ENCODE measurements at regions of chr1 and their contacts with region 1.

Region 1: DNA sequence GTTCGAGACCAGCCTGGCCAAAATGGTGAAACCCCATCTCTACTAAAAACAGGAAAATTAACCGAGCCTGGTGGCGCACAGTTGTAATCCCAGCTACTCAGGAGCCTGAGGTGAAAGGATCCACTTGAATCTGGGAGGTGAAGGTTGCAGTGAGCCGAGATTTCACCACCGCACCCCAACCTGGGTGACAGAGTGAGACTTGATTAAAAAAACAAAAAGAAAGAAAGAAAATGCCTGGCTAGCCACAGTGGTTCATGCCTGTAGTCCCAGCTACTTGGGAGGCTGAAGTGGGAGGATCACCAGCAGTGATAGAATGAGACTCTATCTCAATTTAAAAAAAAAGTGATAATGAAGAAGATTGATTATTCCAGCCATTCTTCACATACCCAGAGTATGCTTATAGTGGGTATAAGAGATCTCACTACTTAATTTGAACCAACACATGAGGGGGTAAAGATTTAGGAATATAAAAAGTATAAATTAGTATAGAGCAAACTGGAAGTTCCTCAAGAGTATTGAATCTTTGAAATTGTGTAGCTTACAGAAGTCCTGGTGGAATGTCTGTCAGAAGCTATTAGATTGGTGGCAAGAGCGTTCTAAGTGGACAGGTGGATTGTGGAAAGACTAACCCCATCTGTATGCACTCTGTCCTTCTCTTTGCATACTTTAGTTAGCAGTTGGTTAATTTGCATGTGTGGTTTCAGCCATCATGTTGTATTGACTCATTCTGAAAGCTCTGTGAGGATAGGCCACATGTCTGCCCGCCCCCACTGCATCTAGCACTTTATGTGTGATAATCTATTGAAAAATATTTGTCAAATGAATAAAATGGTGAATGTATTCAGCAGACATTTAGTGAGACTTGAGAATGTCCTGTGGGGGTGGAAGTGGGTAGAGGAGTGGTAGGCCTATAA is 25.0 kb downstream of the RLF start:
- DNase-seq: peak; percentile 86
- ATAC-seq: peak; percentile 95
- H3K4me3 Mint-ChIP-seq: no peak overlapping the region
- H3K27ac Mint-ChIP-seq: peak overlapping the region; percentile 80
- H3K4me1 Mint-ChIP-seq: peaks cover 48% of the 10 kb centered on the region
- H3K27me3 Mint-ChIP-seq: no peaks in the 10 kb centered on the region
- CTCF ChIP-seq: no peak

Region 2: DNA sequence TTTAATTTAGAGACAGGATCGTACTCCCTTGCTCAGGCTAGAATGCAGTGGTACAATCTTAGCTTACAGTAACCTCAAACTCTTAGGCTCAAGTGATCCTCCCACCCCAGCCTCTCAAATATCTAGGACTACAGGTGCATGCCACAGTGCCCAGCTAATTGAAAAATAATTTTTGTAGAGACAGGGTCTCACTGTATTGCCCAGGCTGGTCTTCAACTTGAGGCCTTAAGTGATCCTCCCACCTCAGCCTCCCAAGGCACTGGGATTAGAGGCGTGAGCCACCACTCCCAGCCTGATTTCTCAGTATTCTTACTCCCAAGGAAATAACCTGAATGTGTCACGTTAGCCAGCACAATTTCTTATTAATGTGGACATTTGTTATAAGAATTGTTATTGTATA is 15.2 kb before region 1 on chr1:
- CTCF ChIA-PET with region 1: interaction called, 11 read pairs
- POLR2A ChIA-PET with region 1: interaction called, 3 read pairs
- intact Hi-C with region 1: no loop called
- DNase-seq: no peak
- ATAC-seq: no peak
- H3K4me3 Mint-ChIP-seq: no peak overlapping the region
- H3K27ac Mint-ChIP-seq: no peak overlapping the region
- H3K4me1 Mint-ChIP-seq: peaks cover 46% of the 10 kb centered on the region
- H3K27me3 Mint-ChIP-seq: no peaks in the 10 kb centered on the region
- CTCF ChIP-seq: no peak

Region 3: GRCh38 chr1:40699787-40700186 is 513.6 kb after region 1 on chr1:
- CTCF ChIA-PET with region 1: no interaction called
- POLR2A ChIA-PET with region 1: no interaction called
- intact Hi-C with region 1: no loop called
- DNase-seq: peak; percentile 17
- ATAC-seq: peak; percentile 76
- H3K4me3 Mint-ChIP-seq: no peak overlapping the region
- H3K27ac Mint-ChIP-seq: peak overlapping the region; percentile 67
- H3K4me1 Mint-ChIP-seq: peaks cover 66% of the 10 kb centered on the region
- H3K27me3 Mint-ChIP-seq: no peaks in the 10 kb centered on the region
- CTCF ChIP-seq: no peak

Measured in activated CD8-positive, alpha-beta T cell treated with anti-CD3 and anti-CD28 coated beads for 36 hours (primary cell).